Endothelial cell of umbilical vein (primary cell): ENCODE measurements at regions of chr7 and their contacts with region 1.

Region 1: GRCh38 chr7:155277690-155277994 is 20.0 kb upstream of the INSIG1 start:
- DNase-seq: peak; percentile 52
- H3K4me3 ChIP-seq: no peak overlapping the region
- H3K27ac ChIP-seq: no peak overlapping the region
- H3K4me1 ChIP-seq: peaks cover 23% of the 10 kb centered on the region
- H3K27me3 ChIP-seq: peaks cover 2 to 12% of the 10 kb centered on the region in 2 experiments
- CTCF ChIP-seq: no peak
- POLR2A ChIP-seq: no peak

Region 2: GRCh38 chr7:155257482-155258225 is 20.0 kb before region 1 on chr7:
- CTCF ChIA-PET with region 1: interaction called, 3 read pairs
- POLR2A ChIA-PET with region 1: no interaction called
- dilution Hi-C with region 1: no loop called
- intact Hi-C with region 1: loop called (anchors 2 kb)
- DNase-seq: peak; percentile 73
- H3K4me3 ChIP-seq: no peak overlapping the region
- H3K27ac ChIP-seq: no peak overlapping the region
- H3K4me1 ChIP-seq: peaks cover 12% of the 10 kb centered on the region
- H3K27me3 ChIP-seq: no peaks in the 10 kb centered on the region
- CTCF ChIP-seq: no peak
- POLR2A ChIP-seq: no peak

Region 3: DNA sequence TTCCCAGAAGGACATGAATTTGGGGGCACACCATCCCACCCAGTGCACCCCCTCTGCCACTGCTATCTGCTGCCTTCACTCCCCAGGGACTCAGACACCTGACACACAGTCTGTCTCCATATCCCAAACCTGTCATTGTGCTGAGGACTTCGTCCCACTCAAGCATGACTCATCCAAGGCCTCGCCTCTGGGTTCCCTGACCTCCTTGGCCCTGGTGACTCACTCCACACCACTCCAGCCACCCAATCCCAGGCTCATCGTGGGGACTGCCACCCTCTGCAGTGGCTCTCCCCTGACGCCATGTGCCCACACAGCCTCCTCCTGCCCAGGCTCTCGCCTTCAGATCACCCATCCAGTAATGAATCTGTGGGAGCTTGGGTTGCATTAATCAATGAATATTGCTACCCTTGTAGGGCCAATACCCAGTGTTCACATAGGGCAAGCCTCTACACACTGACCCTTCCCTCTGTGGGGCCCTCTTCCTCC is 13.4 kb after region 1 on chr7:
- CTCF ChIA-PET with region 1: interaction called, 3 read pairs
- POLR2A ChIA-PET with region 1: no interaction called
- dilution Hi-C with region 1: no loop called
- intact Hi-C with region 1: loop called (anchors 1 kb)
- DNase-seq: peak; percentile 37
- H3K4me3 ChIP-seq: no peak overlapping the region
- H3K27ac ChIP-seq: no peak overlapping the region
- H3K4me1 ChIP-seq: peaks cover 15% of the 10 kb centered on the region
- H3K27me3 ChIP-seq: no peaks in the 10 kb centered on the region
- CTCF ChIP-seq: no peak
- POLR2A ChIP-seq: no peak

Region 4: GRCh38 chr7:155306673-155307470 is 29.2 kb after region 1 on chr7:
- CTCF ChIA-PET with region 1: no interaction called
- POLR2A ChIA-PET with region 1: no interaction called
- dilution Hi-C with region 1: no loop called
- intact Hi-C with region 1: no loop called
- DNase-seq: no peak
- H3K4me3 ChIP-seq: no peak overlapping the region
- H3K27ac ChIP-seq: no peak overlapping the region
- H3K4me1 ChIP-seq: no peaks in the 10 kb centered on the region
- H3K27me3 ChIP-seq: no peaks in the 10 kb centered on the region
- CTCF ChIP-seq: no peak
- POLR2A ChIP-seq: no peak

Region 5: GRCh38 chr7:155426543-155427410 is 149.1 kb after region 1 on chr7:
- CTCF ChIA-PET with region 1: no interaction called
- POLR2A ChIA-PET with region 1: no interaction called
- dilution Hi-C with region 1: no loop called
- intact Hi-C with region 1: no loop called
- DNase-seq: no peak
- H3K4me3 ChIP-seq: no peak overlapping the region
- H3K27ac ChIP-seq: no peak overlapping the region
- H3K4me1 ChIP-seq: no peaks in the 10 kb centered on the region
- H3K27me3 ChIP-seq: no peaks in the 10 kb centered on the region
- CTCF ChIP-seq: no peak
- POLR2A ChIP-seq: no peak